ENCODE measurements at regions of chr6 and their contacts with region 1.

Region 1: GRCh38 chr6:79070206-79070825 is 7.7 kb downstream of the PHIP start:
- DNase-seq: no peak

Region 2: GRCh38 chr6:79170959-79171358 is 100.6 kb after region 1 on chr6:
- in situ Hi-C with region 1: no loop called
- DNase-seq: peak; percentile 5

Region 3: GRCh38 chr6:79421707-79422484 is 351.6 kb after region 1 on chr6:
- in situ Hi-C with region 1: no loop called
- DNase-seq: peak; percentile 22

Region 4: GRCh38 chr6:79506251-79506650 is 435.9 kb after region 1 on chr6:
- in situ Hi-C with region 1: loop called (anchors 25 kb)
- DNase-seq: no peak